ENCODE measurements at regions of chr1 and their contacts with region 1.

Region 1: GRCh38 chr1:237562242-237562823 is 328.4 kb downstream of the ZP4 start:
- DNase-seq: peak in 2 of 9 experiments; percentile 54 to 62
- ATAC-seq: no peak
- H3K4me3 ChIP-seq: no peak overlapping the region
- H3K4me3 Mint-ChIP-seq: no peak overlapping the region
- H3K27ac ChIP-seq: no peak overlapping the region
- H3K27ac Mint-ChIP-seq: no peak overlapping the region
- H3K4me1 ChIP-seq: no peaks in the 10 kb centered on the region
- H3K4me1 Mint-ChIP-seq: no peaks in the 10 kb centered on the region
- H3K27me3 ChIP-seq: no peaks in the 10 kb centered on the region
- H3K27me3 Mint-ChIP-seq: peaks cover 11% of the 10 kb centered on the region
- CTCF ChIP-seq: peak; percentile 62

Region 2: GRCh38 chr1:236489710-236490377 is 1072.5 kb before region 1 on chr1:
- CTCF ChIA-PET with region 1: no interaction called
- POLR2A ChIA-PET with region 1: no interaction called
- intact Hi-C with region 1: loop called in 1 of 2 experiments (anchors 10 kb)
- DNase-seq: peak in 2 of 9 experiments; percentile 57 to 65
- ATAC-seq: no peak
- H3K4me3 ChIP-seq: no peak overlapping the region
- H3K4me3 Mint-ChIP-seq: no peak overlapping the region
- H3K27ac ChIP-seq: no peak overlapping the region
- H3K27ac Mint-ChIP-seq: no peak overlapping the region
- H3K4me1 ChIP-seq: no peaks in the 10 kb centered on the region
- H3K4me1 Mint-ChIP-seq: peaks cover 3% of the 10 kb centered on the region
- H3K27me3 ChIP-seq: peaks cover 0 to 4% of the 10 kb centered on the region in 2 experiments
- H3K27me3 Mint-ChIP-seq: peaks cover 32% of the 10 kb centered on the region
- CTCF ChIP-seq: peak; percentile 69

Measured in CD8-positive, alpha-beta T cell (primary cell).